GM12878 (cell line): ENCODE measurements at regions of chr12 and their contacts with region 1.

Region 1: DNA sequence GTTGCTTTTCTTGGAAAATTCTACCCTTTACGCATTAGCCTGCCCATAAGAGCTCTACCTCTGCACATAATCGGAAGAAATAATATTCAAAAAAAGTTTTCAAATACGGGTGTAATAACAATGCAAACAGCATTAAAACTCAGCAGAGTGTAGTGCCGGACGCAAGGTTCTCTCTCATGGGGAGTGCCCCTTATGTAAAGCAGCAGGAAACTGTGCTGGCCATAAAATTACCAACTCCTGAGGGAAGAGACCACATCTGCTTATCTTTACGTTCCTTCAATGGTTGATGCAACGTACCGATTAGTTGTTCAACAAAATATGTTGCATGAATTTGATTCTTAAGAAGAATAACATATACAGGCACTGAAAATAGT is 118.7 kb upstream of the TMCC3 start:
- DNase-seq: peak; percentile 53
- ATAC-seq: peak; percentile 91
- H3K4me3 ChIP-seq: peak overlapping the region; percentile 55; the same call in 1 of the 2 replicates
- H3K27ac ChIP-seq: peak overlapping the region; percentile 78
- H3K4me1 ChIP-seq: peaks cover 37% of the 10 kb centered on the region
- H3K27me3 ChIP-seq: no peaks in the 10 kb centered on the region
- CTCF ChIP-seq: no peak
- EP300 ChIP-seq: no peak
- POLR2A ChIP-seq: peak; percentile 26; the same call in 1 of the 2 replicates
- RAD21 ChIP-seq: no peak

Region 2: GRCh38 chr12:94676031-94676641 is 92.9 kb before region 1 on chr12:
- CTCF ChIA-PET with region 1: no interaction called
- POLR2A ChIA-PET with region 1: no interaction called
- RAD21 ChIA-PET with region 1: no interaction called
- SMC1A ChIA-PET with region 1: no interaction called
- in situ Hi-C with region 1: no loop called
- intact Hi-C with region 1: no loop called
- DNase-seq: peak; percentile 65
- ATAC-seq: peak; percentile 84
- H3K4me3 ChIP-seq: no peak overlapping the region; the same call in 1 of the 2 replicates
- H3K27ac ChIP-seq: peak overlapping the region; percentile 76
- H3K4me1 ChIP-seq: peaks cover 27% of the 10 kb centered on the region
- H3K27me3 ChIP-seq: no peaks in the 10 kb centered on the region
- CTCF ChIP-seq: no peak
- EP300 ChIP-seq: peak; percentile 42 to 56; a peak in 2 of 4 replicates
- POLR2A ChIP-seq: no peak
- RAD21 ChIP-seq: no peak

Region 3: GRCh38 chr12:94870511-94870910 is 101.5 kb after region 1 on chr12:
- CTCF ChIA-PET with region 1: interaction called, 54 read pairs
- POLR2A ChIA-PET with region 1: interaction called, 12 read pairs
- RAD21 ChIA-PET with region 1: interaction called, 60 read pairs
- SMC1A ChIA-PET with region 1: interaction called, 65 read pairs
- in situ Hi-C with region 1: no loop called
- intact Hi-C with region 1: loop called (anchors 2 kb)
- DNase-seq: no peak
- ATAC-seq: no peak
- H3K4me3 ChIP-seq: peak overlapping the region; percentile 92
- H3K27ac ChIP-seq: peak overlapping the region; percentile 91
- H3K4me1 ChIP-seq: peaks cover 22% of the 10 kb centered on the region; the same call in 1 of the 2 replicates
- H3K27me3 ChIP-seq: no peaks in the 10 kb centered on the region
- CTCF ChIP-seq: no peak
- EP300 ChIP-seq: no peak
- POLR2A ChIP-seq: no peak
- RAD21 ChIP-seq: no peak